ENCODE measurements at regions of chr10 and their contacts with region 1.

Region 1: DNA sequence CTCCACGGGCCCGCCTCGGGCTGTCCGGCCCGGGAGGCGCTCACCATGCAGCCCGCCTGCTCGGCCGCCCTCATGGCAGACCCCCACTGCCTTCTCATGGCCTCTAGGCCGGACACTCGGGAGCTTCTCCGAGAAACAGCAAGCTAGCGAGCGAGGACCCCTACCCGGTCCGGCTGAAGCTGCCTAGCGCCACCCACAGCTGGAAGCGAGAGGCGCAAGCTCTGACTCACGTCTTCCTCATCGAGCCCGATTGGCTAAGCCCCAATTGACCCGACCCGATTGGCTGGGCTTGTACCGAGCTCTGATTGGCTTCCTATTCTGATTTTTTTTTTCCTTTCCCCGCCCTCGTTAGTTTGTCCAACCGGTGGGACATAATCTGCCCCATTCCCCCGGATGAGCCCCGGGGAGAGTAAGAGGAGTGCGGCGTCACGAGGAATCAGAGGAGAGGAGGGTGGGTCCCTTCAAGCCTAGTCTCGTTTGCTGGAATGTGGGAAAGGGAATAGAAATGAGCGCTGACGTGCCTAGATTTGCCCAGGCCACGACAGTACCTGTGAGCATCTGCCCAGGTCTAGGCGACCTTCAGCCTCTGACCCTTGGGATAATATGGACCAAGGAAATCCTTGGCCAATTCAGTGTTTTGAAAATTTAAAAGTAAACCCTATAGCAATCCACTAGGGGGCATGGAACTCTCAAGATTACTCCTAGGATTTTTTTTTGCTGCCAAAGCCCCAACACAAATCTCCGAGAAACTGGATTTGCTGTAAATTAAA is at the start of gene TYSND1:
- DNase-seq: peak; percentile 97
- ATAC-seq: peak; percentile 86
- H3K4me3 Mint-ChIP-seq: peak within 1 kb of the TSS; percentile 87
- H3K27ac Mint-ChIP-seq: peak within 1 kb of the TSS; percentile 91
- H3K4me1 Mint-ChIP-seq: peaks cover 32% of the 10 kb centered on the region
- H3K27me3 Mint-ChIP-seq: no peaks in the 10 kb centered on the region
- total RNA-seq, gene TYSND1: 12.4 to 13.8 TPM

Region 2: GRCh38 chr10:70093335-70093944 is 53.2 kb before region 1 on chr10:
- CTCF ChIA-PET with region 1: interaction called, 53 read pairs
- DNase-seq: peak; percentile 71
- ATAC-seq: peak; percentile 81
- H3K4me3 Mint-ChIP-seq: peak overlapping the region; percentile 80
- H3K27ac Mint-ChIP-seq: peak overlapping the region; percentile 89
- H3K4me1 Mint-ChIP-seq: peaks cover 37% of the 10 kb centered on the region
- H3K27me3 Mint-ChIP-seq: no peaks in the 10 kb centered on the region

Region 3: DNA sequence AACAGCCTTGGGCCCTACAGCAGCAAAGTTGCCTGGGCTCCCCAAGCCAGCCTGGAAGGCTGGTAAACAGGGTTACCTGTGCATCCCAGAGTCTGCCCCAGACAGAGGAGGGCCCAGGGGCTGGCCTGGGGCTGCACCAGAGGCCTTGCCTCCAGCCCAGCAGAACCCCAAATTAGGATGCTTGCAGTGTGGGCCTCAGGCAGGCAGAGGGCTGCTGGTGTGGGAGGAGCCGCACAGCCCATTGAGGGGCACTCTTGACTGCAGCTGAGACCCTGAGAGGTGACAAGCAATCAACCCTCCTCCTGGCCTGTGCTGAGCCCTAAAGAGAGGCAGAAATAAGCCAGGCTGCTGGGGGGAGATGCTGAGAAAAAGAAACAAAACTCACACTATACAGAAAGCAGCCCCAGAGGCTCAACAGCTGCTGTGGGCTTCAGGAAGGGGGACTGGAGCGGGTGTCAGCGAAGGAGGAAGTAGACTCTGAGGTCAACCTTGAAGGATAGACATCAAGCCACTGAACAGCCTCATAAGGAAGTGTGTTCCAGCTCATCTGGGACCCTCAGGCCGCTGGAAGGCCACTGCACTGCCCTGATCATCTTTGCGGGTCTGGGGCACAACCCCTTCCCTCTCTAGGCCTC is 20.6 kb before region 1 on chr10:
- CTCF ChIA-PET with region 1: interaction called, 16 read pairs
- DNase-seq: no peak
- ATAC-seq: no peak
- H3K4me3 Mint-ChIP-seq: no peak overlapping the region
- H3K27ac Mint-ChIP-seq: no peak overlapping the region
- H3K4me1 Mint-ChIP-seq: peaks cover 19% of the 10 kb centered on the region
- H3K27me3 Mint-ChIP-seq: no peaks in the 10 kb centered on the region

Region 4: GRCh38 chr10:70162892-70163201 is 16.2 kb after region 1 on chr10:
- CTCF ChIA-PET with region 1: interaction called, 33 read pairs
- DNase-seq: peak; percentile 86
- ATAC-seq: peak; percentile 90
- H3K4me3 Mint-ChIP-seq: peak overlapping the region; percentile 54
- H3K27ac Mint-ChIP-seq: peak overlapping the region; percentile 70
- H3K4me1 Mint-ChIP-seq: peaks cover 67% of the 10 kb centered on the region
- H3K27me3 Mint-ChIP-seq: no peaks in the 10 kb centered on the region

Region 5: GRCh38 chr10:70197235-70197945 is 50.7 kb after region 1 on chr10:
- CTCF ChIA-PET with region 1: interaction called, 27 read pairs
- DNase-seq: peak; percentile 73
- ATAC-seq: peak; percentile 58
- H3K4me3 Mint-ChIP-seq: no peak overlapping the region
- H3K27ac Mint-ChIP-seq: peak overlapping the region; percentile 70
- H3K4me1 Mint-ChIP-seq: peaks cover 50% of the 10 kb centered on the region
- H3K27me3 Mint-ChIP-seq: no peaks in the 10 kb centered on the region

Region 6: GRCh38 chr10:70241081-70241480 is 94.4 kb after region 1 on chr10:
- CTCF ChIA-PET with region 1: no interaction called
- DNase-seq: no peak
- ATAC-seq: no peak
- H3K4me3 Mint-ChIP-seq: no peak overlapping the region
- H3K27ac Mint-ChIP-seq: no peak overlapping the region
- H3K4me1 Mint-ChIP-seq: no peaks in the 10 kb centered on the region
- H3K27me3 Mint-ChIP-seq: peaks cover 26% of the 10 kb centered on the region